Mammary epithelial cell (primary cell): ENCODE measurements at regions of chr16 and their contacts with region 1.

Region 1: DNA sequence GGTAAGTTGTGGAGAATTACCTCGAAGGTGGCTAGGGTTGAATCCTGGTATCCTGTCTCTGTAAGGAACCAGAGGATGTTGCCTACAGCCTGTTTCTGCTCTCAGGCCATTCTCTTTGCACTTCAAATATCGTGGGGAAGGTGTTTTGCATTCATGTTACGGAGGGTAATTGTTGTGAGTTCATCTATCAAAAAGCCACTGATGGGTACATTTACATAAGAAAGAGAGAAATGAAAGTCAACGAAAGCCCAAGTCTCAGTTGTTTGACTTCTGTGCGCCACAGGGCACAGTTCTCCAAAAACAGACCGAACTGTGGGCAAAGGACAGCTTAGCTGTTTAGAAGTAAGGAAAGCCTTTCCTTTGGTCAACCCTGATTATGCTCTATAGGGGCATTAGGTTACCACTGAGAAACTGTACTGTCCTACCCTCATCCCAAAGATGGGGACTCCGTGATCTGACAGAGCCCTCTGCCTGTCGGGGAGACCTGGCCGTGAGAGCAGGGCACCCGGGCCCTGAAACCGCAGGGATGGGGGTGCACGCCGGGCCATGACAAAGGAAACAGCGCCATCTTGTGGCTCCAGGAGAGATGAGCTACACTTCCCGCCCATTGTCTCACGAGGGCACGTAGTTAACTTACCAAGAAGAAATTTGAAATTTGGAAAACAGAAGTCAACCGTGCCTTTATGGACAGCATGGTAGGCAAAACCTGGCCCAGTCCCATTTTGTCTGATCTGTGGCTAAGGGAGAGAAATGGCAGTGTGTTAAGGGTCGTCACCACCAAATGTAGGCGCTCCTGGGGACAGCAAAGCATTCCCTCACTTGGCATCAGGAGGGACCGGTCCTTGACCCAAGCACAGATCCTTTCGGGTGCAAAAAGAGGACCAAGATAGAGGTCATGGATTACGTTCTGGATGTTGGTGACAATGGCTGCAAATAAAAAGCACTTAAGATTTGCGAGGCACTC is 74.5 kb upstream of the DYNLRB2 start:
- DNase-seq: peak; percentile 35
- H3K4me3 ChIP-seq: no peak overlapping the region
- H3K27ac ChIP-seq: no peak overlapping the region
- H3K4me1 ChIP-seq: peaks cover 6% of the 10 kb centered on the region
- H3K27me3 ChIP-seq: no peaks in the 10 kb centered on the region
- CTCF ChIP-seq: peak; percentile 84 to 92

Region 2: DNA sequence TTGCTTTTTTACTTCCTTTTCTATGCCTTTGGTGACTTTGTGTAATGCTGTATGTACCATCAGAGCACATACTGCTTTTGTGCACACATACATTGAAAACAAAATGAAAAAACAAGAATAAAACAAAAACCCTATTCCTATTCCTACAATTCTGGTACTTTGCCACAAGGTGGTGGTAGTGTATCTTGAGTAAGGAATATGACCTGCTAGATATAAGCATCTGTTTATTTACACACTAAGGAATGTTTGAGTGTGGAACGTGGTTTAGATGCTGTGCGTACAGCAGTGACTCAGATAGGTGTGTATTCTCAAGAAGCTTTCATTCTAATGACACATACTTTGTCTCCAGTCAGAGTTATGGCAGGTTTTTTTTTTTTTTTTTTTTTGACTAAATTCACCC is 1760.6 kb before region 1 on chr16:
- CTCF ChIA-PET with region 1: no interaction called
- dilution Hi-C with region 1: no loop called
- in situ Hi-C with region 1: no loop called
- intact Hi-C with region 1: loop called (anchors 5 kb)
- DNase-seq: peak; percentile 66
- H3K4me3 ChIP-seq: no peak overlapping the region
- H3K27ac ChIP-seq: no peak overlapping the region
- H3K4me1 ChIP-seq: no peaks in the 10 kb centered on the region
- H3K27me3 ChIP-seq: no peaks in the 10 kb centered on the region
- CTCF ChIP-seq: peak; percentile 56

Region 3: DNA sequence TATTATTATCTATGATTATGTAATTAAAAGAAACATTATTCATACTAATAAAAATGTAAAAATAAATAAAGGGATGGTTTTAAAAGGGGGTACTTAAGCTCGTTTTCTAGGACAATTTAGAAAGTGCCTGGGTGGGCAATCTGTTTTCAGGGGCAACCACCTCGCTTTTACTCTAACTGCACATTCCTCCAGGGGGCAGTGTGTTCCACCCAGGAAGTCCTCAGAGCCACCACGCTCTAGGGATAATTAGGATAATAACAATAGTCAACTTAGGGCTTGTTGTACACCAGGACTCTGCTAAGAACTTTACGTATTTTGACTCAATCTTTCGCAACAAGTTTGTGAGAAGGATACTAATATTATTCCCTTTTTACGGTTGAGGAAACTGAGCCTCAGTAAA is 469.0 kb before region 1 on chr16:
- CTCF ChIA-PET with region 1: no interaction called
- dilution Hi-C with region 1: no loop called
- in situ Hi-C with region 1: no loop called
- intact Hi-C with region 1: loop called (anchors 1 kb)
- DNase-seq: no peak
- H3K4me3 ChIP-seq: no peak overlapping the region
- H3K27ac ChIP-seq: no peak overlapping the region
- H3K4me1 ChIP-seq: peaks cover 4% of the 10 kb centered on the region
- H3K27me3 ChIP-seq: no peaks in the 10 kb centered on the region
- CTCF ChIP-seq: peak; percentile 48 to 59

Region 4: GRCh38 chr16:80369138-80369958 is 97.0 kb before region 1 on chr16:
- CTCF ChIA-PET with region 1: interaction called, 5 read pairs
- dilution Hi-C with region 1: no loop called
- in situ Hi-C with region 1: no loop called
- intact Hi-C with region 1: loop called (anchors 5 kb)
- DNase-seq: peak; percentile 39
- H3K4me3 ChIP-seq: no peak overlapping the region
- H3K27ac ChIP-seq: no peak overlapping the region
- H3K4me1 ChIP-seq: peaks cover 4% of the 10 kb centered on the region
- H3K27me3 ChIP-seq: no peaks in the 10 kb centered on the region
- CTCF ChIP-seq: peak; percentile 70 to 85